ENCODE measurements at regions of chr5 and their contacts with region 1.

Region 1: DNA sequence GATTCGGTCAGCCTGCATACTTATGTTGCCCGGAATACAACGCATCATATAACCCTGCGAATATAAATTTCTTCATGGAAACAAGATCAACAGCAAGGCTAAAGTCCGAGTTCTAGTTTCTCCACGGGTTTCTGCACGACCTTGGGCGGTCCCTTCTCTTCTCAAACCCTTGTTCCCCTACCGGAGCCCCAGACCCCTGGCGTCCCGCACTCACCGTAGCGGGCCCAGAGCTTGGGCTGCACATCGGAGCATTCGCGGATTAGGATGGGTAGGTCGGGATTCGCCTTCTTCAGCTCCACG is 438 bp downstream of the NDUFA2 start:
- DNase-seq: no peak
- H3K4me3 ChIP-seq: peak overlapping the region; percentile 79
- H3K27ac ChIP-seq: peak overlapping the region in 1 of 2 donors; percentile 71
- H3K4me1 ChIP-seq: peaks cover 1% of the 10 kb centered on the region
- H3K27me3 ChIP-seq: no peaks in the 10 kb centered on the region
- CTCF ChIP-seq: no peak
- EP300 ChIP-seq: no peak
- POLR2A ChIP-seq: no peak

Region 2: DNA sequence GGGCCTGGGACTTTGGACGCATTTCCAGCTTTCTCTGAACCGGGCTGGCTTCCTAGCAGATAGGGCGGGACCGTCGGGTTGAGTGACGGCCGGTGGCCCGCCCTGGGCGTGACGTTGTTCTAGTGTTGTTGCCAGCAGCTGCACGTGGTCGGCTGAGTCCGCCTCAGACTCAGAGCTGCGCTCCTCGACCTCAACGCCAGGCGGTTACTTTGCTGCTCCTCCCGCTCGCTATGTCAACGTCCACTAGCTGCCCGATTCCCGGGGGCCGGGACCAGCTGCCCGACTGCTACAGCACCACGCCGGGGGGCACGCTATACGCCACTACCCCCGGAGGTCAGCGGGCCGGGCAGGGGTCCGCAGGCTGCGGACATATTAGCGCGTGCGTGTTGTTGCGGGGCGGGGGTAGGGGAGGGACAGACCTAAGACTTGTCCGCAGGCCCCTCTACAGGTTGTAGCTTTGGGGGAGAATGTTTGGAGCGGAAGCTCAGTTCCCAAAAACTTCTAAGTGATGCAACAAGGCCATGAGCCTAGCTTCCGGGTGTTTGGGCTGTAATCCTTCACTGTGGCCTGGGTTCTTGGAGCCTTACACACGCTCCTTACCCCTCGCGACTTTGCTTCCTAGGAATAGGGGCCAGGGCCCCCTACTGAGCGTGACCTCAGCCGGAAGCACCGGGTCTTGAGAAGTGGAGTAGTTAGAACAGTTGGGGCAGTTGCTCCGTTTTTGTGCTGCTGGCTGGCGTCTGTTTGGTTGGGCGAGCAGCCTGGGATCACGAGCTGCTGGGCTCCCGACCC is 99.3 kb before region 1 on chr5 and contains the start of gene EIF4EBP3:
- intact Hi-C with region 1: loop called in 2 of 4 experiments (anchors 5 kb)
- DNase-seq: peak; percentile 97 to 99 (median 98)
- H3K4me3 ChIP-seq: peak within 1 kb of the TSS; percentile 48
- H3K27ac ChIP-seq: peak within 1 kb of the TSS; percentile 91 to 96
- H3K4me1 ChIP-seq: peaks cover 15% of the 10 kb centered on the region
- H3K27me3 ChIP-seq: no peaks in the 10 kb centered on the region
- CTCF ChIP-seq: peak; percentile 68 to 97 (median 92)
- EP300 ChIP-seq: peak; percentile 35
- POLR2A ChIP-seq: peak; percentile 90
- total RNA-seq, gene EIF4EBP3: 8.6 to 23.6 (median 17.8) TPM